K562 (cell line): ENCODE measurements at regions of chr5 and their contacts with region 1.

Region 1: DNA sequence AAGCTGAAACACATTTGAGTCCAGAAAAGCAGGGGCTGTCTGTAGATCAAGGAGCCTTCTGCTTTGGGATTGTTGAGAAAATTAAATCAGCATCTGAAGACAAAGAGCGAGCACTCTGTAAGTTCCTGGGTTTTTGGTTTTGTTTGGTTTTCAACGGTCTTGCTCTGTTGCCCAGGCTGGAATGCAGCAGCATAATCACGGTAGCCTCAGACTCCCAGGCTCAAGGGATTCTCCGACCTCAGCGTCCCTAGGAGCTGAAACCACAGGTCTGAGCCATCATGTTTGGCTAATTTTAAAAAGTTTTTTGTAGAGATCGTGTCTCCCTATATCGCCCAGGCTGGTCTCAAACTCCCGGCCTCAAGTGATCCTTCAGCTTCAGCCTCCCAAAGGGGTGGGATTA is 266.5 kb upstream of the ADAMTS16 start:
- DNase-seq: no peak
- ATAC-seq: no peak
- H3K4me3 ChIP-seq: no peak overlapping the region
- H3K27ac ChIP-seq: no peak overlapping the region
- H3K4me1 ChIP-seq: no peaks in the 10 kb centered on the region
- H3K27me3 ChIP-seq: peaks cover 3 to 8% of the 10 kb centered on the region in 2 experiments; a peak in 3 of 5 replicates
- CTCF ChIP-seq: no peak
- EP300 ChIP-seq: no peak
- POLR2A ChIP-seq: no peak
- RAD21 ChIP-seq: no peak

Region 2: DNA sequence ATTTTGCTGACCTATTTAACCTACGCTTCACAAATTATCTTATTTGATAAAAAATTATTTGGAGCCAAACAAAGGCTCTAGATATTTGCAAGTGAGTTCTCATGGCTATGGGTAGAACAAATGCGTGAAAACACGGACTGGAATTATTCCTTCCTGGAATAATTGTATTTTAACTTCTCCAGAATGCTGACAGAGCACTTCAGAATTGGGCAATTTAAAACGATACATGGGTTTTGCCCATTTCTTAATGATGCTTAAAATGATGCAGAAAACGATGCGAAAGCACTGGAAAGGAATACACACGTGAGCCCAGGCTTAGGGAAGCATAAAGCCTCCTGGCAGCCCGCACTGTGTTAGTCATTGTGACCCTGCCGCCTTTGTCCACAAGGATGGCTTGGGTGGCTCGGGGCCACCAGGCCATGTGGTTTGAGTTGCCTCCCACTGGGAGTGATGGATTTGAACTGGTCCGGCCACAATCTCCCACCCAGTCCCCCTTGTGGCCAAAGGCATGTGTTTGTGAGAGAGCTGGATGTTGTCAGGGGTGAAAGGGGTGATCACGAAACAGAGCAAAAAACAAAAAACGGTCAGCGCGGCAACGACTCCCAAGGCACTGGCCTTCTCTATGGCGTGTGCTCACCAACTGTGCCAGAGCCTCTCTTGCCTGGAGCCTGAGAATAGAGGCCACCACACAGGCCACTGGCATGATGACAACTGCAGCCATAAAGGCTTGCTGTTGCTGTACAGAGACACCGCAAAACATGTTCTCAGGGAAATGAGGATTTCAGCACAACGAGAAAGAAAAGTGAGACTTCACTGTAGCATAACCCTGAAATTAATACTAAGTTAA is 32.2 kb after region 1 on chr5:
- CTCF ChIA-PET with region 1: no interaction called
- POLR2A ChIA-PET with region 1: no interaction called
- in situ Hi-C with region 1: no loop called
- intact Hi-C with region 1: no loop called
- DNase-seq: peak; percentile 16 to 25 (median 20)
- ATAC-seq: peak; percentile 75
- H3K4me3 ChIP-seq: no peak overlapping the region
- H3K27ac ChIP-seq: no peak overlapping the region
- H3K4me1 ChIP-seq: no peaks in the 10 kb centered on the region
- H3K27me3 ChIP-seq: peaks cover 4 to 16% of the 10 kb centered on the region in 2 experiments; a peak in 3 of 5 replicates
- CTCF ChIP-seq: 0 out of 6 replicates have a peak, but pooled peaks of 1 of the 3 experiments have one; percentile 21
- EP300 ChIP-seq: no peak
- POLR2A ChIP-seq: no peak
- RAD21 ChIP-seq: no peak

Region 3: DNA sequence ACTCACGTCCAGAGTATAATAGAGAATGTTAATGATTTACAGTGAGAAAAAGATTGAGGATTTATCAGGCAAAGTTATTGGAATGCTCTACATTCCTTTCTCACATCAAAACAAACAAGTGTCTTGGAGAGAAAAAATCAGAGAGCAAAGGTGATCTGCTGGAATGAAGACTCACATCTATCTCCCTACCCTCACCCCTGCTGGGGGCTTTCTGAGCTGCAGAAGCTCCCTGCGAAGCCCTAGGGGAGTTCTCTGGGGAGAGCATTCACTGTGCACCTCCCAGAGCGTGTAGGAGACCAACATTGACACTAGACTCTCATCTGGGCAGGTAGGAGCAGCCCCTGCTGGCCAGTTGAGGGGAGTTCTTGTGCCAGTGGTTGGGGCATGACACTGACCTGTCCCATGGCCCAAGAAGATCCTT is 189.9 kb after region 1 on chr5:
- CTCF ChIA-PET with region 1: no interaction called
- POLR2A ChIA-PET with region 1: no interaction called
- in situ Hi-C with region 1: no loop called
- intact Hi-C with region 1: loop called (anchors 5 kb)
- DNase-seq: peak in 1 of 4 experiments; percentile 11
- ATAC-seq: peak; percentile 74
- H3K4me3 ChIP-seq: no peak overlapping the region
- H3K27ac ChIP-seq: no peak overlapping the region
- H3K4me1 ChIP-seq: no peaks in the 10 kb centered on the region
- H3K27me3 ChIP-seq: no peaks in the 10 kb centered on the region
- CTCF ChIP-seq: peak in 2 of 3 experiments; percentile 24 to 38; a peak in 3 of 6 replicates
- EP300 ChIP-seq: no peak
- POLR2A ChIP-seq: no peak
- RAD21 ChIP-seq: no peak

Region 4: GRCh38 chr5:5473224-5473623 is 599.6 kb after region 1 on chr5:
- CTCF ChIA-PET with region 1: no interaction called
- POLR2A ChIA-PET with region 1: no interaction called
- in situ Hi-C with region 1: no loop called
- intact Hi-C with region 1: no loop called
- DNase-seq: no peak
- ATAC-seq: no peak
- H3K4me3 ChIP-seq: no peak overlapping the region
- H3K27ac ChIP-seq: no peak overlapping the region
- H3K4me1 ChIP-seq: no peaks in the 10 kb centered on the region
- H3K27me3 ChIP-seq: no peaks in the 10 kb centered on the region
- CTCF ChIP-seq: no peak
- EP300 ChIP-seq: no peak
- POLR2A ChIP-seq: no peak
- RAD21 ChIP-seq: no peak